ENCODE measurements at regions of chr5 and their contacts with region 1.

Region 1: GRCh38 chr5:32444431-32445286 is at the start of gene ZFR:
- DNase-seq: peak; percentile 91 to 95 (median 93)
- ATAC-seq: peak; percentile 95
- H3K4me3 ChIP-seq: peak within 1 kb of the TSS; percentile 67
- H3K4me3 Mint-ChIP-seq: peak within 1 kb of the TSS; percentile 79 to 94 (median 92)
- H3K27ac ChIP-seq: peak within 1 kb of the TSS; percentile 93
- H3K27ac Mint-ChIP-seq: peak within 1 kb of the TSS; percentile 75 to 96 (median 93)
- H3K4me1 ChIP-seq: peaks cover 16 to 20% of the 10 kb centered on the region in 2 donors
- H3K4me1 Mint-ChIP-seq: peaks cover 24 to 38% (median 33%) of the 10 kb centered on the region in 7 donors
- H3K27me3 ChIP-seq: no peaks in the 10 kb centered on the region
- H3K27me3 Mint-ChIP-seq: peaks cover 0 to 17% (median 0%) of the 10 kb centered on the region in 5 donors
- total RNA-seq, gene ZFR: 53.4 to 59.3 (median 58.0) TPM

Region 2: DNA sequence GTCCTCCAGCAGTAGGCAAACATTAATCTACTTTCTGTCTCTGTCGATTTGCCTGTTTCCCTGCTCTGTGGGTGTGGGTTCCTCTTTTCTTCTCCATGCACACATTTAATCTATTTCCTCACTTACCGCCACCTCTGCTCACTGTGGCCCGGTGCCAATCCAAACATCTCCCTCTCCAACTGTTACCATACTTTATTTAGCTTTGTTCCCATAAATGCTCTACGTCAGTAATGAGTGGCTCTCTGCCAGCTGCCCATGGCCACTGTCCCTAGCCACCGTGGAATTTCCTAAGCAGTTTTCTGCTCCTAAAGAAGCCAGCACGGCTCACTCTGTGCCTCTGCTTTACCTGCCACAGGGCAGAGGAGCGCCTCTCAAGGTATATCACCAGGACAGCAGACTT is 251.1 kb before region 1 on chr5:
- CTCF ChIA-PET with region 1: no interaction called
- POLR2A ChIA-PET with region 1: no interaction called
- intact Hi-C with region 1: no loop called
- DNase-seq: no peak
- ATAC-seq: peak; percentile 57
- H3K4me3 ChIP-seq: no peak overlapping the region
- H3K4me3 Mint-ChIP-seq: no peak overlapping the region
- H3K27ac ChIP-seq: no peak overlapping the region
- H3K27ac Mint-ChIP-seq: no peak overlapping the region
- H3K4me1 ChIP-seq: no peaks in the 10 kb centered on the region
- H3K4me1 Mint-ChIP-seq: peaks cover 0 to 7% (median 0%) of the 10 kb centered on the region in 7 donors
- H3K27me3 ChIP-seq: no peaks in the 10 kb centered on the region
- H3K27me3 Mint-ChIP-seq: peaks cover 9 to 22% (median 10%) of the 10 kb centered on the region in 5 donors

Region 3: GRCh38 chr5:32406650-32407049 is 38.0 kb before region 1 on chr5:
- CTCF ChIA-PET with region 1: no interaction called
- POLR2A ChIA-PET with region 1: interaction called, 3 read pairs
- intact Hi-C with region 1: loop called in 1 of 2 experiments (anchors 5 kb)
- DNase-seq: no peak
- ATAC-seq: no peak
- H3K4me3 ChIP-seq: no peak overlapping the region
- H3K4me3 Mint-ChIP-seq: no peak overlapping the region
- H3K27ac ChIP-seq: no peak overlapping the region
- H3K27ac Mint-ChIP-seq: no peak overlapping the region
- H3K4me1 ChIP-seq: no peaks in the 10 kb centered on the region
- H3K4me1 Mint-ChIP-seq: peaks cover 0 to 11% (median 4%) of the 10 kb centered on the region in 7 donors
- H3K27me3 ChIP-seq: no peaks in the 10 kb centered on the region
- H3K27me3 Mint-ChIP-seq: no peaks in the 10 kb centered on the region

Region 4: DNA sequence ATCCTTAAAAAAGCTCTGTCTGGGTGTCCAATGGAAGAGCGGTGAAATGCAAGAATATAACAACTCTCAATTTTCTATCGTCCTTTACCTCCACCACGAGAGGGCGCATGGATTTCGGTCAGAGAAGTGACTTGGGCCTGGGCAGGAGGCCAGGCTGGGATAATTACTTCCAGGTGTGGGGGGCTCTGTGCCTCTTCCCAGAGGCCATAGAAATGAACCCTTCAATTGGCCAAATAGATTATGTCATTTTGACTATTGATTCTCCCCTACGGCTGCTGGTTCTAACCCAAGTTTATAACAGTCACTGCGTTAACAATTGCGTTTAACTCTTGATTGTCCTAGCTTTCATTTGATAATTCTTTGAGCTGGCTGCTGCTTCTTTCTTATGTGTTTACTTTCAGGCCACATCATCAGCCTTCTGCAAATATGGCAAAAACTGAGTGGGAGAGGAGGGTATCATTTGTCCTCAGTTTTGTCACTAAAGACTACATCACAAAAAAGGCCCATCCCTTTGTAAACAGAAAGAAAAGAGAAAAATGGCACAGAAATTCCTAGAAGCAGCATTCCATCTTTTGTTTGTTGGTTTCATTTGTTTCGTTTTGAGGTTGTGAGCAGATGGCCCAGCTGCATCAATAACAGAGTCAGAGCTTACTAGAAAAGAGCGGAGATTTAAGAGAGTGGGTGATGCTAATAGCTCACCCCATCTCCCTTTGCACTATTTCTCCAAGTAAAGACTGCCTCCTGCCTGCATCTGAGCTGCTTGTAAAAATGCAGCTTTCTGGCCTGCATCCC is 45.3 kb after region 1 on chr5:
- CTCF ChIA-PET with region 1: no interaction called
- POLR2A ChIA-PET with region 1: no interaction called
- intact Hi-C with region 1: loop called in 1 of 2 experiments (anchors 5 kb)
- DNase-seq: peak; percentile 40 to 72 (median 64)
- ATAC-seq: peak; percentile 82
- H3K4me3 ChIP-seq: no peak overlapping the region
- H3K4me3 Mint-ChIP-seq: no peak overlapping the region
- H3K27ac ChIP-seq: no peak overlapping the region
- H3K27ac Mint-ChIP-seq: peak overlapping the region in 4 of 9 donors; percentile 11 to 56 (median 31)
- H3K4me1 ChIP-seq: no peaks in the 10 kb centered on the region
- H3K4me1 Mint-ChIP-seq: peaks cover 0 to 11% (median 7%) of the 10 kb centered on the region in 7 donors
- H3K27me3 ChIP-seq: no peaks in the 10 kb centered on the region
- H3K27me3 Mint-ChIP-seq: no peaks in the 10 kb centered on the region

Region 5: GRCh38 chr5:32574540-32575175 is 130.0 kb after region 1 on chr5:
- CTCF ChIA-PET with region 1: no interaction called
- POLR2A ChIA-PET with region 1: no interaction called
- intact Hi-C with region 1: no loop called
- DNase-seq: no peak
- ATAC-seq: no peak
- H3K4me3 ChIP-seq: no peak overlapping the region
- H3K4me3 Mint-ChIP-seq: no peak overlapping the region
- H3K27ac ChIP-seq: no peak overlapping the region
- H3K27ac Mint-ChIP-seq: no peak overlapping the region
- H3K4me1 ChIP-seq: no peaks in the 10 kb centered on the region
- H3K4me1 Mint-ChIP-seq: peaks cover 0 to 19% (median 0%) of the 10 kb centered on the region in 7 donors
- H3K27me3 ChIP-seq: no peaks in the 10 kb centered on the region
- H3K27me3 Mint-ChIP-seq: no peaks in the 10 kb centered on the region